WTC11 (cell line): ENCODE measurements at regions of chr11 and their contacts with region 1.

Region 1: DNA sequence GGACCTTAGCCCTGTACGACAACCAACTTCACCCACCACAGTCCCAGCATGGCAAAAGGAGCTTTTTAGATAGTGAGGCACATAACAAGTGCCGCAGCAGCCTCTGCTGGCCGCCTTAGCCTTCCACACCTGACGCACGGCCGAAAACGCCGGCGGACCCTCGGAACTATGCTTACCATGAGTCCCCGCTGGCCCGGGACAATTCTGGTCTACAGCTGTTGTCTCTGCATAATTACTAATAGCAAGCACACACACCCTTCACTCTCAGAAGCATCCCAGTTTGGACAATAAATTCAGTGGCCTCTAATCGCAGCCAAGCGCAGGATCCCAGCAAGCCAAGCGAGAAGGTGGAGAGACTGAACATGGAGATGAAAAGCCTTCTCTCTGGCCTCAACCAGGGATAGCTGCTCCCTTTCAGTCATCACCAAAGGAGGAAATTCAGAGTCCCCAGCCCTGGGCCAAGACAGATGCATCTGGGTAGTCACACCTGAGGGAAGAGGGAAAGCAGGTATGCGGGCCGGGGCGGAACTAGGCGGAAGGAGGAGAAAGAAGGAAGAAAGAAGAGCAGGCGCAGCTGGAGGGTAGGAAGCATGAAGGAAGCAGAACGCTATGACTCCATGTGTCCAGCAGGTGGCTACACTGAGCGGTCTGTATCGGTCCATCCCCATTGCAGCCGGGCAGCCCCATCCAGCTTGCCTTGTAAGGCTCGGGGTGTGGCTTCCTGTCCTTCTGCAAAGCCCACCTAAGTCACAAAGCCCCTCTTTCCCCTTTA is 40.3 kb downstream of the BUD13 start:
- DNase-seq: peak; percentile 85
- ATAC-seq: peak; percentile 88
- H3K4me3 Mint-ChIP-seq: peak overlapping the region; percentile 64
- H3K27ac Mint-ChIP-seq: peak overlapping the region; percentile 50; the same call in 1 of the 2 replicates
- H3K4me1 Mint-ChIP-seq: peaks cover 36% of the 10 kb centered on the region
- H3K27me3 Mint-ChIP-seq: no peaks in the 10 kb centered on the region
- CTCF ChIP-seq: peak; percentile 85

Region 2: DNA sequence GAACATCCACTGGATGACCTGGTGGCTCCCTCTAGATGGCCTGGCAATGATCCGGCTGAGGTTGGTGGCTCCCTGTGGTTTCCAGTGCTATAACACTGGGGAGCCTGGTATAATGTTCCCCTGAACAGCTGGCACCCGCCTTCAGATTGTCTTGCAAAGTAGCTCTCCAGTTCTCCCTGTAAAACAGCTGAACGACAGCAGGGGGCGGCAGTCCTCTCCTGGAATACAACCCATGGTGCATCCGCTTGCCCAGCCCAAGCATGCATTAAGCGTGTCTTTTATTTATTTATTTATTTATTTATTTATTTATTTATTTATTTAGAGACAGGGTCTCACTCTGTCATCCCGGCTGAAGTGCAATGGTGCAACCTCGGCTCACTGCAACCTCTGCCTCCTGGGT is 218.6 kb before region 1 on chr11:
- CTCF ChIA-PET with region 1: interaction called, 16 read pairs
- POLR2A ChIA-PET with region 1: no interaction called
- DNase-seq: peak; percentile 87
- ATAC-seq: peak; percentile 79
- H3K4me3 Mint-ChIP-seq: no peak overlapping the region
- H3K27ac Mint-ChIP-seq: no peak overlapping the region
- H3K4me1 Mint-ChIP-seq: peaks cover 29% of the 10 kb centered on the region
- H3K27me3 Mint-ChIP-seq: peaks cover under 1% of the 10 kb centered on the region
- CTCF ChIP-seq: peak; percentile 58

Region 3: GRCh38 chr11:116618461-116618860 is 114.0 kb before region 1 on chr11:
- CTCF ChIA-PET with region 1: no interaction called
- POLR2A ChIA-PET with region 1: no interaction called
- DNase-seq: no peak
- ATAC-seq: no peak
- H3K4me3 Mint-ChIP-seq: no peak overlapping the region
- H3K27ac Mint-ChIP-seq: no peak overlapping the region
- H3K4me1 Mint-ChIP-seq: no peaks in the 10 kb centered on the region
- H3K27me3 Mint-ChIP-seq: peaks cover 13% of the 10 kb centered on the region
- CTCF ChIP-seq: no peak

Region 4: DNA sequence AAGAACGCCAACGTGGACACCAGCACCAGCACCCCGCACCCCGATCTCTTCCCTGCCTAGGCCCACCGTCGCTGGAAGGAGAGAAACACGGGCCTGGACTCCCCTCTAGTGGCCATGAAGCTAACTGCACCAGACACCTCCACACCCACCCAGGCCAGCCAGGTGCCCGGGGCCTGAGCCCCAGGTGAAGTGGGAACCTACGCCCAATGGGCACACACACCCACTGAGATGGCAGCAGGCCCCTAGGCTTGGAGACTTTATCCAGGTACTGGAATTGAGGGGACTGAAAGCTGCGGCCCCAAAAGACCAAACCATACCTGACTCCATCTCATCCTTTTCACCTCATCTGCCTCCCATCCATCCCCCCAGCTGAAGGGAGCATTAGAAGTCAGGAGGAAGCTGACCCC is 40.7 kb before region 1 on chr11:
- CTCF ChIA-PET with region 1: interaction called, 29 read pairs
- POLR2A ChIA-PET with region 1: no interaction called
- DNase-seq: peak; percentile 85
- ATAC-seq: peak; percentile 50
- H3K4me3 Mint-ChIP-seq: no peak overlapping the region
- H3K27ac Mint-ChIP-seq: no peak overlapping the region
- H3K4me1 Mint-ChIP-seq: peaks cover 29% of the 10 kb centered on the region
- H3K27me3 Mint-ChIP-seq: no peaks in the 10 kb centered on the region
- CTCF ChIP-seq: peak; percentile 89

Region 5: GRCh38 chr11:116715383-116715782 is 17.1 kb before region 1 on chr11:
- CTCF ChIA-PET with region 1: interaction called, 55 read pairs
- POLR2A ChIA-PET with region 1: interaction called, 3 read pairs
- DNase-seq: peak; percentile 48
- ATAC-seq: peak; percentile 83
- H3K4me3 Mint-ChIP-seq: no peak overlapping the region
- H3K27ac Mint-ChIP-seq: no peak overlapping the region
- H3K4me1 Mint-ChIP-seq: peaks cover 15% of the 10 kb centered on the region
- H3K27me3 Mint-ChIP-seq: peaks cover 9% of the 10 kb centered on the region
- CTCF ChIP-seq: no peak

Region 6: DNA sequence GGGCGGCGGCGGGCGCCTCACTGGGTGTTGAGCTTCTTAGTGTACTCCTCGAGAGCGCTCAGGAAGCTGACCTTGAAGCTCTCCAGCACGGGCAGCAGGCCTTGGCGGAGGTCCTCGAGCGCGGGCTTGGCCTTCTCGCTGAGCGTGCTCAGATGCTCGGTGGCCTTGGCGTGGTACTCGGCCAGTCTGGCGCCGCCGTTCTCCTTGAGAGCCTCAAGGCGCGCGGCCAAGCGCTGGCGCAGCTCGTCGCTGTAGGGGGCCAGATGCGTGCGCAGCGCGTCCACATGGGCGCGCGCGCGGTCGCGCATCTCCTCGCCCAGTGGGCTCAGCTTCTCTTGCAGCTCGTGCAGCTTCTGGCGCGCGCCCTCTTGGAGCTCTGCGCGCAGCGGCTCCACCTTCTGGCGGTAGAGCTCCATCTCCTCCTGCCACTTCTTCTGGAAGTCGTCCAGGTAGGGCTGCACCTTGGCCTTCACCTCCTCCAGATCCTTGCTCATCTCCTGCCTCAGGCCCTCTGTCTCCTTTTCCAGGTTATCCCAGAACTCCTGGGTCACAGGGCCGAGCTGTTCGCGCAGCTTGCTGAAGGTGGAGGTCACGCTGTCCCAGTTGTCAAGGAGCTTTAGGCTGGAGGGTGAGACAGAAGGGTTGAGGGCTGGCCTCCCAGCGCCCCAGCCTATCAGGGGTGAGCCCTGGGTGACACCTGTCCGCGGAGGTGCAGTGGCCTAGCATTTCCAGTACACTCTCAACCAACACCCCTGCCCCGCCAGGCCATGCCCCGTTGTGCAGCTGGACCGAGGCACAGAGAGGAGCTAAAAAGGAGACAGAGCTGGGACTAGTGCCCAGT is 103.6 kb after region 1 on chr11:
- CTCF ChIA-PET with region 1: interaction called, 11 read pairs
- POLR2A ChIA-PET with region 1: no interaction called
- DNase-seq: peak; percentile 88
- ATAC-seq: peak; percentile 83
- H3K4me3 Mint-ChIP-seq: peak overlapping the region; percentile 59
- H3K27ac Mint-ChIP-seq: no peak overlapping the region
- H3K4me1 Mint-ChIP-seq: peaks cover 19% of the 10 kb centered on the region
- H3K27me3 Mint-ChIP-seq: peaks cover 11% of the 10 kb centered on the region
- CTCF ChIP-seq: peak; percentile 12; the same call in 1 of the 2 replicates